ENCODE measurements at regions of chr19 and their contacts with region 1.

Region 1: DNA sequence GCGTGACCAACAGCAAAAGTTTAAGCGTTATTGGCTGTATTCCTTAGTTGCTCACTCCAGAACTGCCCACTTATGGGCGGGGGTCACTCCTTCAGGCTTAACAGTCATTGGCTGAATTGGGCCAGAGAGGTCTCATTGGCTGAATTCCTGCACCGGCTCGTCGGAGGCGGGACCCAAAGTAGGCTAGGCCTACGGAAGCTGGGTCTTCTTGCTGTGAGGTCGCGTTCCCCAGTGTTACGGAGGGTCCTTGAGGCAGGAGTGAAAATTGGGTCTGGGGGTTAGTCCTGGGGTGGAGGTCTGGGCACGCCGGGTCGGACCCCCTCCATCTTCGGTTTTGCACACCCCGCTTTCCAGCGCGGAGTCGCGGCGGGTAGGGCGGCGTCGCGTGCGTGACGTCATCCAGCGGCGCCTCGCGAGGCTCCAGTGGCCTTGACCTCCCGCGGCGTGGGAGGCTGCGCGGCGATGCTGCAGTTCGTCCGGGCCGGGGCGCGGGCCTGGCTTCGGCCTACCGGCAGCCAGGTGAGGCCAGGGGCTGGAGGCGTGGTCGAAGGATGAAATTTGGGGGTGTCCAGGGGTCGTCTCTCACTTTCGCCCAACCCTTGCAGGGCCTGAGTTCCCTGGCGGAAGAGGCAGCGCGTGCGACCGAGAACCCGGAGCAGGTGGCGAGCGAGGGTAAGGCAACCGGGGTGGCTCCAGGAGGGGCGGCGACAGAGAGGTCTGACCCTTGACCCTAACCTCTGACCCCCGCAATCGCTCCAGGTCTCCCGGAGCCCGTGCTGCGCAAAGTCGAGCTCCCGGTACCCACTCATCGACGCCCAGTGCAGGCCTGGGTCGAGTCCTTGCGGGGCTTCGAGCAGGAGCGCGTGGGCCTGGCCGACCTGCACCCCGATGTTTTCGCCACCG is at the start of gene MRPL4:
- DNase-seq: peak; percentile 95 to 99
- H3K4me3 ChIP-seq: peak within 1 kb of the TSS; percentile 90 to 96 (median 91)
- H3K27ac ChIP-seq: peak within 1 kb of the TSS; percentile 86 to 93 (median 88)
- H3K4me1 ChIP-seq: peaks cover 7 to 36% (median 32%) of the 10 kb centered on the region in 4 donors
- H3K27me3 ChIP-seq: no peaks in the 10 kb centered on the region
- CTCF ChIP-seq: peak in 1 of 7 experiments; percentile 17
- EP300 ChIP-seq: no peak
- POLR2A ChIP-seq: peak in 1 of 4 donors; percentile 10
- total RNA-seq, gene MRPL4: 16.1 to 314 (median 58.4) TPM

Region 2: GRCh38 chr19:9981406-9982260 is 270.4 kb before region 1 on chr19:
- intact Hi-C with region 1: no loop called
- DNase-seq: no peak
- H3K4me3 ChIP-seq: no peak overlapping the region
- H3K27ac ChIP-seq: no peak overlapping the region
- H3K4me1 ChIP-seq: no peaks in the 10 kb centered on the region
- H3K27me3 ChIP-seq: peaks cover 0 to 17% (median 4%) of the 10 kb centered on the region in 3 donors
- CTCF ChIP-seq: no peak
- EP300 ChIP-seq: no peak
- POLR2A ChIP-seq: no peak

Region 3: DNA sequence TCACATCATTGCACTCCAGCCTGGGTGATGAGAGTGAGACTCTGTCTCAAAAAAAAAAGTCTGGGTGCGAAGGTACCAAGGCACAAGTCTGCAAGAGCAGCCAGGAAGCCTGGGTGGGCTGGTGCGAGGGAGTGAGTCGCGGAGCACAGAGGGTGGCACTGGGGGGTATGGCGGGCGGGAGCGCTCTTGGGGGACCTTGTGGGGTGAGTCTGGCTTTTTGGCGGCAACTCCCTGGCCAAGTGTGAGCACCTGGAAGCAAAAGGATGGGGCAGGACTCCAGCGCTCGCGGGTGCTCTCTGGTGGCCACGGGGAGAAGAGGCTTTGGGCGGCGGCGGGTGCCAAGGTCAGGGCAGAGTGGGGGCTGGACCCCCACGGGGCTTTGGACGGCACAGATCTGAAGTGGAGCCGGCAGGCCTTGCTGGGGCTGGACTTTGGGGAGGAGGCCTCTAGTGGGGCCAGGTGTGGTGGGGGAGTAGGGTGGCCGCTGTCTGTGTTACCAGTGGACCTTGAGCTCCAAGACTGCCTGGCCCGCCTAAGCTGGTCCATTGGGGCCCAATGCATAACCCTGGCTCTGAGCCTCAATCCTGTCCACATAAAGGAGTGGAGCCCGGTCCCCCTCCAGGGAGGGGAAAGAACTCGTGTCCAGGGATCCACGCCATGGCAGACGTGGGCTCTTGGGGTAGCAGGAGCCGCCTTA is 139.0 kb before region 1 on chr19:
- intact Hi-C with region 1: loop called (anchors 10 kb)
- DNase-seq: peak; percentile 64 to 70
- H3K4me3 ChIP-seq: no peak overlapping the region
- H3K27ac ChIP-seq: peak overlapping the region in 4 of 5 donors; percentile 20 to 58 (median 37)
- H3K4me1 ChIP-seq: peaks cover 0 to 50% (median 27%) of the 10 kb centered on the region in 4 donors
- H3K27me3 ChIP-seq: no peaks in the 10 kb centered on the region
- CTCF ChIP-seq: peak in 5 of 7 experiments; percentile 43 to 74 (median 57)
- EP300 ChIP-seq: no peak
- POLR2A ChIP-seq: no peak

Region 4: GRCh38 chr19:10191347-10191746 is 60.7 kb before region 1 on chr19:
- intact Hi-C with region 1: no loop called
- DNase-seq: peak in 1 of 2 donors; percentile 76
- H3K4me3 ChIP-seq: no peak overlapping the region
- H3K27ac ChIP-seq: peak overlapping the region in 4 of 5 donors; percentile 35 to 48 (median 44)
- H3K4me1 ChIP-seq: peaks cover 31 to 58% (median 39%) of the 10 kb centered on the region in 4 donors
- H3K27me3 ChIP-seq: no peaks in the 10 kb centered on the region
- CTCF ChIP-seq: no peak
- EP300 ChIP-seq: no peak
- POLR2A ChIP-seq: no peak

Region 5: DNA sequence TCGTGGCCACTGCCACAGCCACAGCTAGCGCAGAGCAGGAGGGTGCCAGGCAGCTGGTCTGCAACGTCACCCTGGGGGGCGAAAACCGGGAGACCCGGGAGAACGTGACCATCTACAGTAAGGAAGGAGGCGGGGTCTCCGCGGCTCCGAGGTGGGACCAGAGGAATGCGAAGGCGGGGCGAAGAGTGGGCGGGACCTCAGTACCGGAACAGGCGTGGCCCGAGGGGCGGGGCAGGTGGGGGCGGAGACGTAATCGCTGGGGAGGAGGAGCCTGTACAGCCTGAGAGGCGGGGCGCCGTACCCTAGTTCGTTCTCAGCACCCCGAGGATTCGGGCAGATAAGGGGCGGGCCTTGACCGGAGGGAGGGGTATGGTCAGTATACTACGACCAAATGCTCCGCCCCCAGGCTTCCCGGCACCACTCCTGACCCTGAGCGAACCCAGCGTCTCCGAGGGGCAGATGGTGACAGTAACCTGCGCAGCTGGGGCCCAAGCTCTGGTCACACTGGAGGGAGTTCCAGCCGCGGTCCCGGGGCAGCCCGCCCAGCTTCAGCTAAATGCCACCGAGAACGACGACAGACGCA is 40.3 kb after region 1 on chr19:
- intact Hi-C with region 1: no loop called
- DNase-seq: peak; percentile 82 to 87
- H3K4me3 ChIP-seq: peak overlapping the region; percentile 33 to 51 (median 43)
- H3K27ac ChIP-seq: peak overlapping the region in 1 of 5 donors; percentile 34
- H3K4me1 ChIP-seq: peaks cover 59 to 91% (median 86%) of the 10 kb centered on the region in 4 donors
- H3K27me3 ChIP-seq: peaks cover 49 to 100% (median 95%) of the 10 kb centered on the region in 3 donors
- CTCF ChIP-seq: no peak
- EP300 ChIP-seq: no peak
- POLR2A ChIP-seq: no peak

Measured in stomach (tissue), 19 donors.